Right ventricle myocardium superior (tissue), 1 donor: ENCODE measurements at regions of chr1 and their contacts with region 1.

Region 1: DNA sequence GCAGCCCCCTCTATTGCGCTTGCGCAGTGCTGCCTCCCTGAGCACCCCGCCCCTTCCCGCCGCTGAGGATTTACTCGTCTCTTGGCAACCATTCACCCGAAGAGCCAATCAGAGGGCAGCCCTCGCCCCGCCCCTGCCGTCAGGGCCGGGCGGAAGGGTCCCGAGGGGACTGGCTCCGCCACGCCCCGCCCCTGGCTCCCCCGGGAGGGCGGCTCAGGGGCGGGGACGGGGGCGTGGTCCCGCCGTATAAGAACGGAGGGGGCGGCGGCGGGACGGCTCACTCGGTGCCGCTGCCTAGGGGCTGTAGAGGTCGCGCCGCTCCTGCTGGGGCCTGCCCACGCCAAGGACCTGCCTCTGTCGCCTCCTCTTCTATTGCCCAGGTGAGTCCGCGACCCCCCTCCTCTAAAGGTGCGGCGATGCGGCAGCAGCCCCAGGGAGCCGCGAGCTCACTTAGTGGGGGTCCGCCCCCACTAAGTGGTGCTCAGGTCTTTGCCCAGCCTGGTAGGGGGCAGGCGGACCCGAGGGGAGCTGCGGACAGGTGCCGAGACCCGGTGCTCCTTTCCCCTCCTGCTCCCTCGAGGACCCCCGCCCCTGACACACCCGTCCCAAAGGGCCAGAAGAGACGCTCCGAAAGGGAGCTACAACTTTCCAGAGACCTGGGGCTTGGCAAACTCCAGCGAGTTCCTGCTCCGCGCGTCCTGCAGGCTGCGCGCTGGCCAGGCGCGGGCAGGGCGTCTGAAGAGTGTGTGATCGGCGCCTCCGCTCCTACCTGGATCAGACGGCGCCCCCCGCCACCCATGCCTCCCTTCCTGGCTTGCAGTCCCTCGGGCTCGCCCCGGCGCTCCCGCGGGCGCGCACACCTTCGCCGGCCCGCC is at the start of gene TENT5C:
- DNase-seq: peak; percentile 98
- ATAC-seq: peak; percentile 96
- total RNA-seq, gene TENT5C: 18.7 TPM

Region 2: GRCh38 chr1:117534995-117535467 is 71.0 kb before region 1 on chr1:
- intact Hi-C with region 1: loop called (anchors 10 kb)
- DNase-seq: no peak
- ATAC-seq: peak; percentile 94

Region 3: DNA sequence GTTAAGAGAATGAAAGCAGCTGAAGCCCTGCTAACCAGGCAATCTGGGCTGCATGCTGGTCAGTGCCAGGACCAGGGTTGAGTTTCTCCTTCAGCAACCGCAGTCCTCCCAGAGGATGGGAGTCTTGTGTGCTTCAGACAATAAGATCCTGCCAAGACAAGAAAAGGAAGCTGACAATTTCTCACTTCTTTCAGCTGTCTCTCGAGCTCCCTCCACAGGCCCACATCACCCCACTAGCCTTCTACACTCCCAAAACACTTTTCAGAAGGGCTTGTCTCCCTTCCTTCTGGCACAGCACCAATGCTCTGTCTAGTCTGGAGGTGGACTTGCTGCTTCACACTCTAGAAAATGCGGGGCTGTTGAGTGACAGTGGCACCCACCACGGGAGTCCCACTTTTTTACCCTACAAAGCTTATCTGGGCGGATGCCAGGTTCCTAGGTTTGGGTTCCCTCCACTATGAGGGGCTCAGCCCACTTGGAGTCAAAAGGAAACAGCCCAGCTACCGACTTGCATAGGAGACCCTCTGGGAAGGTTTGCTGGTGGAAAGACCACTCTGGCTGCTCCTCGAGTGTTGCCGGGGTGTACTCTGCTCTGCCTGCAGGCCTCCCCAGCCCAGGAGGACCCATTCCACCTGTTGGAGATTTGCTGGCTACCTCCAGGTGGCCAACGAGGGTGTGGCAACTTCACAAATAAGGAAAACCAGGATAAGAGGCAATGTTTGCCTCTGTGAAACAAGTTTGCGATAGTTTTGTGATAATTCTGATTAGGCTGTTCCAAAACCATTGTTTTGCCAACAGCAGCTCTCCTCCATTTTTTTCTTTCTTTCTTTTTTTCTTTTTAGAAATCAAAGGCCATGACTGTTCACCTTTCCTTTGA is 68.7 kb after region 1 on chr1:
- intact Hi-C with region 1: loop called (anchors 2 kb)
- DNase-seq: no peak
- ATAC-seq: no peak